ENCODE measurements at regions of chr1 and their contacts with region 1.

Region 1: GRCh38 chr1:23800400-23801337 is at the start of gene GALE:
- H3K4me3 ChIP-seq: peak within 1 kb of the TSS; percentile 80
- H3K27ac ChIP-seq: peak within 1 kb of the TSS; percentile 59; the same call in 1 of the 2 replicates
- H3K4me1 ChIP-seq: peaks cover 3% of the 10 kb centered on the region; the same call in 1 of the 2 replicates
- CTCF ChIP-seq: no peak

Region 2: DNA sequence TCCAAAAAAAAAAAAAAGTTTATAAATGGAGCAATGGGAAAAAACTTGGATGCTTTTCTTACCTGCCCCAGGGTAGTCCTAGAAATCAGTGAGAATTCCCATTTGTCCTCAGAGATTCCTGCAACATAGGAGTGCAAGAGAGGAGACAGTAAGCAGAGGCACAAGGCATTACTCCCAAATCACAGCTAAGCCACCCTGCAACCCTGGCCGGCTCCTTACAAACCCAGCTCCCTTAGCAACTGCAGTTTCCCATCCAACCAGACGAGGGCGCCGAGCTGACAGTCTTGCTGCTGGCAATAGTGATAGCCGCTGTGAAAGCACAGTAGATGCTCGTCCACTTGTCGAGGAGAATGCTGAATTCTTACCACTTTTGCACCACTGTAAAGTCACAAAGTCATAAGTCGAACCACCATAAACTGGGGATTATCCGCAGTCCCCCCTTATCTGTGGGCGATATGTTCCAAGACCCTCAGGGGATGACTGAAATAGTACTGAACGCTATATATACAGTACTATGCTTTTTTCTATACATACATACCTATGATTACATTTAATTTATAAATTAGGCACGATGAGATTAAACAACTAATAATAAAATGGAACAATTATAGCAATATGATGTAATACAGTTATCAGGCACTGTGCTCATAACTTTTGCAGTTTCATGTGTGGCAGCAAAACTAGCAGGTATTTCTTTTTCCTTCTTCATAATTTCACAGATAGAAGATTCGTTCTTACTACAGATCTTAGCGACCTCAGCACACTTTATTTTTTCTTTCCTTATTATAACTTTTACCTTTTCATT is 28.4 kb before region 1 on chr1:
- CTCF ChIA-PET with region 1: interaction called, 15 read pairs
- POLR2A ChIA-PET with region 1: interaction called, 101 read pairs
- H3K4me3 ChIP-seq: no peak overlapping the region
- H3K27ac ChIP-seq: no peak overlapping the region
- H3K4me1 ChIP-seq: no peaks in the 10 kb centered on the region
- CTCF ChIP-seq: peak; percentile 83

Region 3: GRCh38 chr1:23777979-23778814 is 22.5 kb before region 1 on chr1 and contains the start of gene PITHD1:
- CTCF ChIA-PET with region 1: interaction called, 4 read pairs
- POLR2A ChIA-PET with region 1: interaction called, 101 read pairs
- H3K4me3 ChIP-seq: peak within 1 kb of the TSS; percentile 95
- H3K27ac ChIP-seq: peak within 1 kb of the TSS; percentile 80
- H3K4me1 ChIP-seq: peaks cover 7% of the 10 kb centered on the region; the same call in 1 of the 2 replicates
- CTCF ChIP-seq: no peak

Region 4: GRCh38 chr1:23825076-23825761 is 24.6 kb after region 1 on chr1 and contains the start of gene HMGCL:
- CTCF ChIA-PET with region 1: no interaction called
- POLR2A ChIA-PET with region 1: interaction called, 11 read pairs
- H3K4me3 ChIP-seq: peak within 1 kb of the TSS; percentile 97
- H3K27ac ChIP-seq: peak within 1 kb of the TSS; percentile 57
- H3K4me1 ChIP-seq: no peaks in the 10 kb centered on the region
- CTCF ChIP-seq: no peak

Region 5: GRCh38 chr1:23916209-23917131 is 115.8 kb after region 1 on chr1:
- CTCF ChIA-PET with region 1: interaction called, 16 read pairs
- POLR2A ChIA-PET with region 1: no interaction called
- H3K4me3 ChIP-seq: no peak overlapping the region
- H3K27ac ChIP-seq: no peak overlapping the region
- H3K4me1 ChIP-seq: no peaks in the 10 kb centered on the region
- CTCF ChIP-seq: peak; percentile 73

Measured in HEK293 (cell line).